ENCODE measurements at regions of chr2 and their contacts with region 1.

Region 1: GRCh38 chr2:74198461-74199274 is at the start of gene MTHFD2:
- DNase-seq: peak; percentile 96
- H3K4me3 Mint-ChIP-seq: peak within 1 kb of the TSS; percentile 95
- H3K27ac Mint-ChIP-seq: peak within 1 kb of the TSS; percentile 98
- H3K4me1 Mint-ChIP-seq: peaks cover 23% of the 10 kb centered on the region
- H3K27me3 Mint-ChIP-seq: no peaks in the 10 kb centered on the region
- CTCF ChIP-seq: peak; percentile 85
- total RNA-seq, gene MTHFD2: 177 and 205 TPM in 2 replicates

Region 2: DNA sequence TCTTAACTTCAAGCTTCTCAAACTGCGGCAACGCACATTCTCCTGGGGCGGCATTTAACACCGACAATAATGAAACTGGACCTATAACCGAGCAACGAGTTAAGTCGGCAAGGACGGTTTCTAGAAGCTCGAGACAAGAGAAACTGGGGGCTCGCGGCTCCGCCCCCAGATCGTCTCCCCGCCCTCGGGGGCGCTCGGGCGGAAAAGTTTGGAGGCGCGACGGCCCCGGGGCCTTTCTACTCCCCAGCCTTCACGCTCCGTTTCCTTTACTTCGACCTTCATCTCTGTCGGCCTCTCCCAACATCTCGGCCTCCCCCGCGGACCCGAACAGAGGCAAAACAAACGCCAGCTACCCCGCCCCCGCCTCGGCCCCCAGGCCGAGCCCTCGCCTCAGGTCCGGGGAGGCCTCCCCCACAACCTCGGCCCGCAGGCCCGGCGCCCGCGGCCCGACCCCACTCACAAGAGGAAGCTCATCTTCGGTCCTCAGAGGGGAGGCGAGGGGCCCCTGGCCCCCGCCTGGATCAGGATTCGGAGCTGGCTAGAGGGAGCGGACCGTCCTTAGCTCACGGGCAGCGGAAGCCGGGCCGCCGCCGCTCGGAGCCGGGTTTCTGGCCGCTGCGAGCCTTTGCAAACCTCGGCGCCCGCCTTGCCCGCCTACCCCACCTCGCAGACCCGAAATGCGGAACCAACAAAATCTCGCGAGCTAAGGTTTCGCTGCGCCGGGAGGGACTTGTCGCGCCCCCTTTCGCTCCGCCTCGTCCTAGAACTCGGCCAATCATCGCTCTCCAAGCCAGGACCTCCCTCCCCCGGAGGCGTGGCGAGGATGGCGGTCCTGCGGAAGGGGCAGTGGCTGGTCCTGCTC is 20.2 kb before region 1 on chr2 and contains the start of gene MOB1A:
- CTCF ChIA-PET with region 1: interaction called, 12 read pairs
- intact Hi-C with region 1: loop called (anchors 1 kb)
- DNase-seq: peak; percentile 99
- H3K4me3 Mint-ChIP-seq: peak within 1 kb of the TSS; percentile 84
- H3K27ac Mint-ChIP-seq: peak within 1 kb of the TSS; percentile 36
- H3K4me1 Mint-ChIP-seq: peaks cover 16% of the 10 kb centered on the region
- H3K27me3 Mint-ChIP-seq: peaks cover 2% of the 10 kb centered on the region
- CTCF ChIP-seq: no peak
- total RNA-seq, gene MOB1A: 116 and 119 TPM in 2 replicates

Region 3: DNA sequence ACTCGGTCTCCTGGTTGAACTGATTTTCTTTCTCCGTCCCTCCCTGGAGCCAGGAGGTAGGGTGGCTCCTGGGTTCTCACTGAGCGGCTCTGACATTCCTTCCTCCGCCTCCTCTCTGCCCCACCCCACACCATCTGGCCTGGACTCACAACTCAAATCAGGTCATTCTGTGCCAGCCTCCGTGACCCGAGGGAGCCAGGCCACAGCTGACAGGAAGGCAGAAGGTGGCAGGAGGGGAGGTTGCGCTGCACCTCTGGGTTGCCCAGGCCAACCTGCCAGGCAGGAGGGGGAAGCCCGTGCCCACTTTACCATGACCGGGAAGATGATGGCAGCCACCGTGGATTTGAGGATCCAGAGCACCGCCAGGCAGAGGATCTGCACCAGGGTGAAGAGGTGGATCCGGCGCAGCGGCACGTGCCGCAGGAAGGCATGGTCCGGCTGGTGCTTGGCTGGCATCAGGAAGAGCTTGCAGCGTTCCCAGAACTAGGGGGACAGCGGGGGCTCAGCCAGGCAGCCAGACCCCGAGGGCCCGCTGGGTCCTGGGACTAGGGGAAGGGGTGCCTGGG is 28.1 kb after region 1 on chr2:
- CTCF ChIA-PET with region 1: no interaction called
- intact Hi-C with region 1: no loop called
- DNase-seq: no peak
- H3K4me3 Mint-ChIP-seq: no peak overlapping the region
- H3K27ac Mint-ChIP-seq: peak overlapping the region; percentile 16
- H3K4me1 Mint-ChIP-seq: peaks cover 14% of the 10 kb centered on the region
- H3K27me3 Mint-ChIP-seq: no peaks in the 10 kb centered on the region
- CTCF ChIP-seq: no peak

Region 4: DNA sequence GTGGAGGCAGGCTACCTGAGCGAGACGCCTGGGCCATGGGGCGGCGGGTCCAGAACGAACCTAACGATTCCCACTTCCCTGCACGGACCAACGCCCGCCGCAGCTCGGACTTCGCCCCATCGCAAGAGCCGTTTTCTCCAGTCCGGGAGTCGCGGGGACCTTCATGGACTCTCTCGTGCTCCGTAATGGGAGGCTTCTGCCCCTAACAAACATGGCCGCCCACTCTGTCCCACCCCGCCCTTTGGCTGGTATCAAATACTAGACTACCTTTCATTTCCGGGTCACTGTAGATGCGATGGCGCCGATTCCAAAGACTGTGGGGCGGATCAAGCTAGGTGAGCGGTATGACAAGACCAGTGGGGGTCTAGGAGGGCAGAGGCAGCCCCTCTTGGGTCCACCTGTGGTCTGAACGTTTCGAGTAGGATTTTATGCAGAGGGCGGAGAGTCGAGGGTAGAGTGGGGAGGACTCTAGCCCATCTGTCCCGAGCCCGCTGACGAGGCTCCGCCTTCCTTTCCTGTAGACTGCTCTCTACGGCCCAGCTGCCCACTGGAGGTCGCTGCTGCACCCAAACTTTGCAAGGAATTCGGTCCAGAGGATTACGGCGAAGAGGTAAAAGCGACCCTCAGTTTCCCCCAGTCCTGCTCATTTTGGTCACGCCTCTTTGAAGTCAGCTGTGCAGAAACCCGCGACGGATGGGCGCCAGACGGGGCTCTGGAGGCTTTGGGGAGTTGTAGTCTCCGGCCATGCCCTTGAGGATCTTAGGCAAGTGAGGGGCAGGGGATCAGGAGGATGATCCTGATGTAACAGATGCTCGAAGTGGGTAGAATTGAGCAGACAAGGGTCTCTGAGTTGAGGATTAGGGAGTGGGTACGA is 284.4 kb after region 1 on chr2 and contains the starts of genes CCDC142 and TTC31:
- CTCF ChIA-PET with region 1: no interaction called
- intact Hi-C with region 1: no loop called
- DNase-seq: peak; percentile 94
- H3K4me3 Mint-ChIP-seq: peak within 1 kb of the TSS; percentile 85
- H3K27ac Mint-ChIP-seq: peak within 1 kb of the TSS; percentile 68
- H3K4me1 Mint-ChIP-seq: peaks cover 24% of the 10 kb centered on the region
- H3K27me3 Mint-ChIP-seq: no peaks in the 10 kb centered on the region
- CTCF ChIP-seq: peak; percentile 79
- total RNA-seq, gene CCDC142: 29.9 and 30.4 TPM in 2 replicates
- total RNA-seq, gene TTC31: 26.2 and 32.9 TPM in 2 replicates